H1 (cell line): ENCODE measurements at regions of chr12 and their contacts with region 1.

Region 1: DNA sequence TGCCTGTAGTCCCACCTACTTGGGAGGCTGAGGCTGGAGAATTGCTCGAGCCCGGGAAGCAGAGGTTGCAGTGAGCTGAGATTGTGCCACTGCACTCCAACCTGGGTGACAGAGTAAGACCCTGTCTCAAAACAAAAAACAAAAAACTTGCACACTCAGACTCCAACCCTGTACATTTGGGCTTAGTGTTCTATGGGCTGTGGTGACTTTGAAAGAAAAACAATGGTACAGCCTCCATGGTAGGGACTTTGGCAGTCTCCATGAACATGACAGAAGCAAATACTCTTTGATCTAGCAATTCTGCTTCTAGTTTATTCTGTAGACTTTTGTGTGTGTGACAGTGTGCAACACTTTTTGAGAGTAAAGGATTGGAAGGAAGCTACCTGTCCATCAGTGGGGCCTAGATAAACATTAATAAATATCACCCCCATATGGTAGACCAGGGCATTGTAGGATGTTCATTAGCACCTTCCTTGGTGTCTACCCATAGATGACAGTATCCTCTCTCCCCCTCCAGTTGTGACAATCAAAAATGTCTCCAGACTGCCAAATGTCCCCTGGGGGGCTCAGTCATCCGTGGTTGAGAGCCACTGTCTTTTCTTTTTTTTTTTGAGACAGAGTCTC is 10.7 kb downstream of the SNRNP35 start:
- DNase-seq: no peak
- H3K4me3 ChIP-seq: no peak overlapping the region
- H3K27ac ChIP-seq: no peak overlapping the region
- H3K4me1 ChIP-seq: no peaks in the 10 kb centered on the region
- H3K27me3 ChIP-seq: no peaks in the 10 kb centered on the region
- CTCF ChIP-seq: peak in 2 of 3 experiments; percentile 11 to 14; a peak in 1 of 4 replicates
- EP300 ChIP-seq: no peak
- POLR2A ChIP-seq: no peak
- RAD21 ChIP-seq: peak; percentile 16 to 28; a peak in 3 of 4 replicates

Region 2: DNA sequence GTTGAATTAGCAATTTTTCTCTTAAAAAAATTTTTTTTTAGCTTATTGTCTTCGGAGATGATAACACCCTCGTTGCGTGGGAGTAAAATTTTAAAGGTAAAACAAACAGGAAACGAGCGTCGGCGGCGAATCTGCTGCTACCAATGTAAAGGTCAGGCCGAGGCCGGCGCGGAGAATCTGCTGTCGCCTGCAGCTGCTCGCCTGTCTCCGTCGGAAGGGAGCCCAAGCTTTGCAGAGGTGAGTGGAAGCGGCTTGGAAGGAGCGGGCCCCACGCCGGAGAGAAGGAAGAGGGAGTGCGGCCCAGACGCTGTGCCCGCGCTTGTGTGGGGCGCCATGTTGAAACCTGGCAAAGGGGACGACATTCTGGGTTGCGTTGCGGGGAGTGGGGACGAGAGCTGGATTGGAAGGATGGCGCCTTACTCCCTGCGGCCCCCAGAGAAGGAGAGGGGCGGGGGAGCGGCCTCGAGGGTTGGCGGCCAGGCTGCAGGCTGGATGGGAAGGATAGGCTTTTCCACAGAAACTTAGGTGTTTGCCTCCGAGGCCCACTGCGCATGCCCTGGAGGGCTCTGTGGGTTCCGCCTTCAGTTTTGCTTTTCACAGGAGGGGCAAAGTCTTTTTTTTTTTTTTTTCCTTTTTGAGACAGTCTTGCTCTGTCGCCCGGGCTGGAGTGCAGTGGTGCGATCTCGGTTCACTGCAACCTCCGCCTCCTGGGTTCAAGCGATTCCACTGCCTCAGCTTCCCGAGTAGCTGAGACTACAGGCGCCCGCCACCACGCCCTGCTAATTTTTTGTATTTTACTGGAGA is 10.5 kb before region 1 on chr12 and contains the start of gene SNRNP35:
- CTCF ChIA-PET with region 1: interaction called, 7 read pairs
- POLR2A ChIA-PET with region 1: interaction called, 11 read pairs
- DNase-seq: peak; percentile 43 to 81
- H3K4me3 ChIP-seq: peak within 1 kb of the TSS; percentile 77 to 98 (median 84)
- H3K27ac ChIP-seq: peak within 1 kb of the TSS; percentile 98
- H3K4me1 ChIP-seq: no peaks in the 10 kb centered on the region
- H3K27me3 ChIP-seq: no peaks in the 10 kb centered on the region
- CTCF ChIP-seq: no peak
- EP300 ChIP-seq: peak in 1 of 2 experiments; percentile 98; a peak in 1 of 3 replicates
- POLR2A ChIP-seq: peak; percentile 66 to 91
- RAD21 ChIP-seq: no peak
- total RNA-seq, gene SNRNP35: 15.3 and 16.9 TPM in 2 replicates